ENCODE measurements at regions of chr12 and their contacts with region 1.

Region 1: GRCh38 chr12:48910196-48910595 is 15.1 kb downstream of the FKBP11 start:
- DNase-seq: no peak
- H3K4me3 ChIP-seq: no peak overlapping the region
- H3K27ac ChIP-seq: no peak overlapping the region
- H3K4me1 ChIP-seq: no peaks in the 10 kb centered on the region
- H3K27me3 ChIP-seq: no peaks in the 10 kb centered on the region
- CTCF ChIP-seq: no peak

Region 2: GRCh38 chr12:48873096-48873495 is 37.1 kb before region 1 on chr12:
- intact Hi-C with region 1: loop called (anchors 1 kb)
- DNase-seq: no peak
- H3K4me3 ChIP-seq: no peak overlapping the region
- H3K27ac ChIP-seq: no peak overlapping the region
- H3K4me1 ChIP-seq: no peaks in the 10 kb centered on the region
- H3K27me3 ChIP-seq: no peaks in the 10 kb centered on the region
- CTCF ChIP-seq: no peak

Region 3: GRCh38 chr12:49623142-49623904 is 713.1 kb after region 1 on chr12 and contains the start of gene PRPF40B:
- intact Hi-C with region 1: no loop called
- DNase-seq: peak; percentile 82 to 93
- H3K4me3 ChIP-seq: peak within 1 kb of the TSS; percentile 57 to 69
- H3K27ac ChIP-seq: peak within 1 kb of the TSS; percentile 89 to 91
- H3K4me1 ChIP-seq: peaks cover 0 to 23% (median 12%) of the 10 kb centered on the region in 4 donors
- H3K27me3 ChIP-seq: no peaks in the 10 kb centered on the region
- CTCF ChIP-seq: peak; percentile 32 to 40

Measured in tibial artery (tissue), 4 donors.